AG04450 (cell line): ENCODE measurements at regions of chr19 and their contacts with region 1.

Region 1: GRCh38 chr19:3324321-3324856 is 42.0 kb upstream of the NFIC start:
- DNase-seq: no peak
- H3K4me3 ChIP-seq: no peak overlapping the region
- H3K27ac ChIP-seq: no peak overlapping the region
- H3K27me3 ChIP-seq: peaks cover 13% of the 10 kb centered on the region
- CTCF ChIP-seq: peak; percentile 72

Region 2: GRCh38 chr19:3304871-3305423 is 19.4 kb before region 1 on chr19:
- CTCF ChIA-PET with region 1: interaction called, 13 read pairs
- POLR2A ChIA-PET with region 1: no interaction called
- DNase-seq: peak; percentile 32
- H3K4me3 ChIP-seq: no peak overlapping the region
- H3K27ac ChIP-seq: no peak overlapping the region
- H3K27me3 ChIP-seq: peaks cover 14% of the 10 kb centered on the region
- CTCF ChIP-seq: peak; percentile 88